ENCODE measurements at regions of chr4 and their contacts with region 1.

Region 1: GRCh38 chr4:3346146-3346545 is 53.3 kb downstream of the RGS12 start:
- DNase-seq: peak; percentile 85
- CTCF ChIP-seq: peak; percentile 73

Region 2: GRCh38 chr4:3452376-3452775 is 106.2 kb after region 1 on chr4:
- in situ Hi-C with region 1: loop called (anchors 10 kb)
- DNase-seq: no peak
- CTCF ChIP-seq: peak; percentile 27

Region 3: GRCh38 chr4:3531879-3532713 is 185.9 kb after region 1 on chr4 and contains the start of gene LRPAP1:
- in situ Hi-C with region 1: no loop called
- DNase-seq: peak; percentile 100
- CTCF ChIP-seq: no peak